CD14-positive monocyte (primary cell): ENCODE measurements at regions of chr6 and their contacts with region 1.

Region 1: GRCh38 chr6:119129148-119129967 is 50.9 kb upstream of the FAM184A start:
- DNase-seq: peak; percentile 58 to 73 (median 68)
- H3K4me3 ChIP-seq: no peak overlapping the region
- H3K4me3 Mint-ChIP-seq: no peak overlapping the region
- H3K27ac ChIP-seq: no peak overlapping the region
- H3K27ac Mint-ChIP-seq: peak overlapping the region in 1 of 7 donors; percentile 11
- H3K4me1 ChIP-seq: peaks cover 10 to 13% of the 10 kb centered on the region in 2 donors
- H3K4me1 Mint-ChIP-seq: peaks cover 13% of the 10 kb centered on the region
- H3K27me3 ChIP-seq: no peaks in the 10 kb centered on the region
- H3K27me3 Mint-ChIP-seq: peaks cover 0 to 3% (median 2%) of the 10 kb centered on the region in 3 donors
- CTCF ChIP-seq: peak; percentile 84

Region 2: GRCh38 chr6:119179842-119180241 is 50.5 kb after region 1 on chr6:
- intact Hi-C with region 1: loop called in 1 of 2 experiments (anchors 10 kb)
- DNase-seq: no peak
- H3K4me3 ChIP-seq: no peak overlapping the region
- H3K4me3 Mint-ChIP-seq: no peak overlapping the region
- H3K27ac ChIP-seq: no peak overlapping the region
- H3K27ac Mint-ChIP-seq: peak overlapping the region in 1 of 7 donors; percentile 10
- H3K4me1 ChIP-seq: no peaks in the 10 kb centered on the region
- H3K4me1 Mint-ChIP-seq: no peaks in the 10 kb centered on the region
- H3K27me3 ChIP-seq: no peaks in the 10 kb centered on the region
- H3K27me3 Mint-ChIP-seq: peaks cover 0 to 1% (median 0%) of the 10 kb centered on the region in 3 donors
- CTCF ChIP-seq: no peak